MCF 10A (cell line): ENCODE measurements at regions of chr3 and their contacts with region 1.

Region 1: DNA sequence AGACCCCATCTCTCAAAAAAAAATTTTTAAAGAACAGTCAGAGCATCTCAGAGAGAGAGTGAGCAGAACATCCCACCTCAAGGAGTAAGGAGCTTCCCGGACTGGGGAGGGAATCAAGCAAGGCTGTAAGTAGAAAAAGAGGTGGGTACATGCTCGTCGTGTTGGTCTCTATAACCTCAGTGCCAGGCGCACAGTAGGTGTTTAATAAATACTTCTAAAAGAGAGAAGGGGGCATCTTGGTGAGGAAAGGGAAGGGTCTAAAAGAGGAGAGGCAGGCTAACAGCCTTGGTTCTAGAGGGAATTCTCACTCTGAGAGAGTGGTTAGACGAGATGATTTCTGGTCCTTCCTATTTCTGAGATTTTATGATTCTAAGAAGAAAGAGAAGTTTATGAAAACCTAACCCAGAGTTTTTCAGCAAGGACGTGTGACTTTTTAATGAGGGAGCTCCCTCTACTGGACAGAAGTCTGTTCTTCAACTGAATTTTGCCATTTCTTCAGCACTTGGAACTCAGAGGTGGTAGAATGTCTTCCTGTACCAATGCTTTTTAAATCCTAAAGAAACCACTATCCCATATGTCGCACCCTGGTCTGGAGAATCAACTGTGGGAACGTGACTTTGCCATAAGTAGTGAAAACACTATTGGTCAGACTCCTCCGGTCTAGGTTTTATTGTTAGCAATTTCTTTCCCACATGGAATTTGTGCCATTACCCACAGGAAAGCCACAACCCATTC is 199.7 kb upstream of the LMCD1 start:
- DNase-seq: peak; percentile 63
- H3K4me3 Mint-ChIP-seq: no peak overlapping the region
- H3K27ac Mint-ChIP-seq: no peak overlapping the region
- H3K4me1 Mint-ChIP-seq: no peaks in the 10 kb centered on the region
- H3K27me3 Mint-ChIP-seq: no peaks in the 10 kb centered on the region
- CTCF ChIP-seq: peak; percentile 75

Region 2: GRCh38 chr3:7800006-7800780 is 501.7 kb before region 1 on chr3:
- CTCF ChIA-PET with region 1: interaction called, 10 read pairs
- POLR2A ChIA-PET with region 1: interaction called, 3 read pairs
- intact Hi-C with region 1: loop called (anchors 2 kb)
- DNase-seq: peak; percentile 4
- H3K4me3 Mint-ChIP-seq: no peak overlapping the region
- H3K27ac Mint-ChIP-seq: peak overlapping the region; percentile 35
- H3K4me1 Mint-ChIP-seq: peaks cover 7% of the 10 kb centered on the region
- H3K27me3 Mint-ChIP-seq: no peaks in the 10 kb centered on the region
- CTCF ChIP-seq: peak; percentile 37

Region 3: DNA sequence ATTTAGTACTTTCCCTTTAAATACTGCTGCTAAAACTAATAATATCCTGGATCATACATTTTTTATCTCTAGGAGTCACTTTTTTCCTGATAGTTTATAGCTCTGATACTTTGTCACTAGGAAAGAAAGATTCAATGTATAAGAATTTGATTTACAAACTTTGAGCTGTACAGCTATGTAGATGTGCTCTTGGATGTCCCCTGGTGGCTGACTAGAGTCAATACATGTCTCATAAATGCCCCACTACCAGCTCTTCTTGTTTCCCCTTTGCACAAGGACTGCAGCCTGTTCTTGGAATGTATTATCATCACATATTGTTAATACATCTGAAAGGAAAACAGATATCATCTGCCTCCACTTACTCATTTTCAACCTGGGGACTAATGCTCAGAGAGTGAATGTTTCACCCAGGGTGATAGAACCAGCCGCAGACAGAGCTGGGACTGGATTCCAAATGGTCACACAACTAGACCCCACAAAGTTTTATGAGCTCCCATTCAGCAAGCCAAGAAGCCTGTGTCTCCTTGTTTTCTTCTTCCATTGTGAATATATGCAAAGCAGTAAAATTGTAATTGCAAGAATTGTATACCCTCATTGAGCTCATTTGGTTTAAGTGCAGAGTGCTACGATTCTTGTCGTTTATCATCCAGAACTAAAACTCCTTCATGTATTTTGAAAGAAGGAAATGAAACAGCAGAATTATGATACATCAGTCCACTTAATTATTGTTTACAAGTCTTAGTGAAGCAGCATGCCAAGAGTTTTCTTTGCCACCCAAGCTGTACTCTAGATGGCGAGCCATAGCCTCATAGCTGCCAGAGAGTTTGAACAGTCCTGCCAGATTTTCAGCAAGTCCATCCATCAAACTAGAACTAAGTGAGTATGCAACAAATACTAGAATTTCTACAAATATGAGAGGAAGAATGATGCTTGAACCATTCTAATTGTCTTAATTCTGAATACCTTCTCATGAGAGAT is 61.9 kb before region 1 on chr3:
- CTCF ChIA-PET with region 1: interaction called, 18 read pairs
- POLR2A ChIA-PET with region 1: no interaction called
- intact Hi-C with region 1: no loop called
- DNase-seq: peak; percentile 68
- H3K4me3 Mint-ChIP-seq: no peak overlapping the region
- H3K27ac Mint-ChIP-seq: no peak overlapping the region
- H3K4me1 Mint-ChIP-seq: peaks cover 10% of the 10 kb centered on the region
- H3K27me3 Mint-ChIP-seq: no peaks in the 10 kb centered on the region
- CTCF ChIP-seq: peak; percentile 90

Region 4: GRCh38 chr3:8283193-8283592 is 18.7 kb before region 1 on chr3:
- CTCF ChIA-PET with region 1: interaction called, 10 read pairs
- POLR2A ChIA-PET with region 1: interaction called, 3 read pairs
- intact Hi-C with region 1: no loop called
- DNase-seq: no peak
- H3K4me3 Mint-ChIP-seq: no peak overlapping the region
- H3K27ac Mint-ChIP-seq: no peak overlapping the region
- H3K4me1 Mint-ChIP-seq: no peaks in the 10 kb centered on the region
- H3K27me3 Mint-ChIP-seq: no peaks in the 10 kb centered on the region
- CTCF ChIP-seq: no peak